HCT116 (cell line): ENCODE measurements at regions of chr10 and their contacts with region 1.

Region 1: GRCh38 chr10:72292223-72292691 is 18.5 kb downstream of the DDIT4 start:
- DNase-seq: peak; percentile 91
- ATAC-seq: peak; percentile 62
- H3K4me3 ChIP-seq: peak overlapping the region in 1 of 2 experiments; percentile 19; a peak in 1 of 4 replicates
- H3K27ac ChIP-seq: peak overlapping the region; percentile 79
- H3K4me1 ChIP-seq: peaks cover 46 to 85% of the 10 kb centered on the region in 2 experiments
- H3K27me3 ChIP-seq: no peaks in the 10 kb centered on the region
- CTCF ChIP-seq: no peak
- POLR2A ChIP-seq: no peak
- RAD21 ChIP-seq: no peak

Region 2: GRCh38 chr10:72308320-72308987 is 16.2 kb after region 1 on chr10:
- CTCF ChIA-PET with region 1: interaction called, 3 read pairs
- POLR2A ChIA-PET with region 1: interaction called, 42 read pairs
- RAD21 ChIA-PET with region 1: no interaction called
- intact Hi-C with region 1: no loop called
- DNase-seq: peak; percentile 82
- ATAC-seq: peak; percentile 74
- H3K4me3 ChIP-seq: peak overlapping the region in 1 of 2 experiments; percentile 5; a peak in 1 of 4 replicates
- H3K27ac ChIP-seq: peak overlapping the region; percentile 54
- H3K4me1 ChIP-seq: peaks cover 30 to 53% of the 10 kb centered on the region in 2 experiments
- H3K27me3 ChIP-seq: no peaks in the 10 kb centered on the region
- CTCF ChIP-seq: no peak
- POLR2A ChIP-seq: no peak
- RAD21 ChIP-seq: no peak